ENCODE measurements at regions of chr6 and their contacts with region 1.

Region 1: DNA sequence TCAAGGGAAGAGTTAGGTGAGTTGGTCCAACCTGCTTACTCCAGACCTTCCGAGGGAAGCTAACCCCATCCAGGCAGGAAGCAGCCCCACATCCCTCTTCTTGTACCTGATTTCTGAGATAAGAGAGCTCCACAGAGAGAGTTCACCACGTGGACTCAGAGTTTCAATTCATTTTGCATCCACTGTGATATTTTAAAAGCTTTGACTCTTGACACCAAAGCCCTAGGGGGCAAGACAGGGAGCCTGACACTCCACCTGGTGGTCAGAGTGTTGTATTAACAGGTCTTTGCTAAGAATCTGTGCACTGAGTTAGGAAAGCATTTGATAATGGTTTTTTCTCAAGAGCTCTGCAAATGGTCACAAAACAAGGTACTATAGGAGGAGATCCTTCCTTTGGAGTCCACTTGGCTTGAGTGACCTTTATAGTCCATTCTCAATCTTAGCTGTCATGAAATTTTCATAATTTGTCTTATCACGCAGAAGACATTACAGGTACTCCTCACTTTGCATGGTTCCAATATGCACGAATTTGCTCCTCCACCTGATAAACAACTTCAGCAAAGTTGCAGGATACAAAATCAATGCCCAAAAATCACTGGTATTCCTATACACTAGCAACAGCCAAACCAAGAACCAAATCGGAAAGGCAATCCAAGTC is 56.2 kb upstream of the RIPOR2 start:
- DNase-seq: peak; percentile 38
- H3K4me3 ChIP-seq: no peak overlapping the region
- H3K27ac ChIP-seq: no peak overlapping the region
- H3K4me1 ChIP-seq: peaks cover 2% of the 10 kb centered on the region
- H3K27me3 ChIP-seq: no peaks in the 10 kb centered on the region
- CTCF ChIP-seq: peak; percentile 63 to 84

Region 2: GRCh38 chr6:24933868-24934401 is 58.0 kb before region 1 on chr6:
- CTCF ChIA-PET with region 1: no interaction called
- dilution Hi-C with region 1: no loop called
- in situ Hi-C with region 1: no loop called
- intact Hi-C with region 1: no loop called
- DNase-seq: no peak
- H3K4me3 ChIP-seq: no peak overlapping the region
- H3K27ac ChIP-seq: no peak overlapping the region
- H3K4me1 ChIP-seq: no peaks in the 10 kb centered on the region
- H3K27me3 ChIP-seq: no peaks in the 10 kb centered on the region
- CTCF ChIP-seq: peak; percentile 25 to 49

Region 3: GRCh38 chr6:25017932-25018567 is 26.1 kb after region 1 on chr6:
- CTCF ChIA-PET with region 1: interaction called, 25 read pairs
- dilution Hi-C with region 1: no loop called
- in situ Hi-C with region 1: no loop called
- intact Hi-C with region 1: loop called (anchors 1 kb)
- DNase-seq: peak; percentile 78
- H3K4me3 ChIP-seq: peak overlapping the region in 1 of 3 experiments; percentile 2
- H3K27ac ChIP-seq: peak overlapping the region; percentile 72
- H3K4me1 ChIP-seq: peaks cover 44% of the 10 kb centered on the region
- H3K27me3 ChIP-seq: no peaks in the 10 kb centered on the region
- CTCF ChIP-seq: peak; percentile 90

Region 4: GRCh38 chr6:25046942-25047341 is 55.0 kb after region 1 on chr6:
- CTCF ChIA-PET with region 1: no interaction called
- dilution Hi-C with region 1: loop called (anchors 5 kb)
- in situ Hi-C with region 1: no loop called
- intact Hi-C with region 1: no loop called
- DNase-seq: no peak
- H3K4me3 ChIP-seq: no peak overlapping the region
- H3K27ac ChIP-seq: no peak overlapping the region
- H3K4me1 ChIP-seq: no peaks in the 10 kb centered on the region
- H3K27me3 ChIP-seq: no peaks in the 10 kb centered on the region
- CTCF ChIP-seq: no peak

Region 5: DNA sequence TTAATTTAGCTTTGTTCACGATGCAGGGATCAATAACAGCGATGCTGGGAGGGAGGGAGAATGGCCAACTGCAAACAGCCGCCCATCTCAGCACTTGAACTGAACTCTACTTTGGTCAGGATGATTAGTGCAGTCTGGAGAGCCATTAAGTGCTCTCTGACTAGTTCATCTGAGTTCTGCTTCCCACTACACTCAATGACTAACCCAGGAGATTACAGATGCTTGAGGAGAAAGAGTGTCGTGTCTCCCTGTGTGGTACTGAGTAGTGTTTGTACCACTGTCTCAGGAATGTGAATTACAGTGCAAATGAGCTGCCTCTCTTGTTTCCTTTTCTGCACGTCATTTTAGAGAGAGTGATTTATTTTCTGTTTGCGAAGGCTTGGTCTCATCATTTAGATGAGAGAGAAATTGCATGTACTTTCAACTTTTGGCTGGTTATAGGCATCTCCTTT is 310.8 kb after region 1 on chr6:
- CTCF ChIA-PET with region 1: no interaction called
- dilution Hi-C with region 1: no loop called
- in situ Hi-C with region 1: no loop called
- intact Hi-C with region 1: no loop called
- DNase-seq: peak; percentile 50
- H3K4me3 ChIP-seq: no peak overlapping the region
- H3K27ac ChIP-seq: no peak overlapping the region
- H3K4me1 ChIP-seq: no peaks in the 10 kb centered on the region
- H3K27me3 ChIP-seq: no peaks in the 10 kb centered on the region
- CTCF ChIP-seq: no peak